ENCODE measurements at regions of chr17 and their contacts with region 1.

Region 1: GRCh38 chr17:5486204-5487124 is at the start of gene MIS12:
- DNase-seq: peak; percentile 95
- ATAC-seq: peak; percentile 94
- H3K4me3 ChIP-seq: peak within 1 kb of the TSS; percentile 100
- H3K27ac ChIP-seq: peak within 1 kb of the TSS; percentile 97
- H3K4me1 ChIP-seq: peaks cover 11% of the 10 kb centered on the region
- H3K27me3 ChIP-seq: no peaks in the 10 kb centered on the region
- CTCF ChIP-seq: no peak
- total RNA-seq, gene MIS12: 9.3 and 10.6 TPM in 2 replicates

Region 2: GRCh38 chr17:5468075-5468473 is 18.4 kb before region 1 on chr17:
- CTCF ChIA-PET with region 1: no interaction called
- POLR2A ChIA-PET with region 1: no interaction called
- intact Hi-C with region 1: loop called (anchors 1 kb)
- DNase-seq: no peak
- ATAC-seq: peak; percentile 14
- H3K4me3 ChIP-seq: peak overlapping the region; percentile 97
- H3K27ac ChIP-seq: peak overlapping the region; percentile 52
- H3K4me1 ChIP-seq: peaks cover 13% of the 10 kb centered on the region
- H3K27me3 ChIP-seq: no peaks in the 10 kb centered on the region
- CTCF ChIP-seq: no peak

Region 3: DNA sequence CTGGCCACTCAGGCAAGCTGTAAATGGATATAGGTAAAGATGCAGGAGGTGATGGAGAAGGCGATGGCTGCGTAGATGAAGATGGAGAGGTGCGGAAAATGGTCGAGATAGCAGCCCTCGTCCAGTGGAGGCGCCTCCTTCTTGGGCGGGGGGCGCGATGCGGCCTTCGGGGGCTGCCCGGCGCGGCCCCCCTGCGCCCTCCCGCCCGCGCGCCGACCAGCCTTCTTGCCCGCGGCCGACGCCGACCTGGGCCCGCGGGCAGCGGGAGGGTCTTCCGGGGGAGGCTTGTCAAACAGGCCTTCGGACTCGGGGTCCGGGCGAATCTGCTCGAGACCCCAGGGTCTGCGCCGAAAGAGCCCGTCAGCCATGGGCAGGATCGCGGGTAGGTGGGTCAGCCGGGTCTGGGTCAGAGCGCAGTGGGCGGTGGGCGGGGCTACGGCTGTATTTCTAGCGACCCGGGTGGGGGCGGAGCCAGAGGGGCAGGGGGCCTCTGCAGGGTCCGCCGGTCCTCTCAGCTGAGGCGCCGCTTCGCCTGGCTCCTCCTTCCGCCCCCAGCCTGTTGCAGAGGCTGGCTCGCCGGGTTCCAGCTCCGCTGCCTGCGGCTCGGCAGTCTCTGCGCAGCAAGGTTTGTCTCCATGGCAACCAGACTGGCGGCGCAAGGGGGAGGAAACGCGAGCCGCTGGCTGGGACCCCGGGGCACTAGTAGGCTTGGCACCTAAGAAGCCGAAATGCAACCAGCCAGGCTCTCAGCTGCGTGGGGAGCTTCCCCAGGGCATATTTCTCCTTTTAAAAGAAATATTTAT is 14.3 kb after region 1 on chr17:
- CTCF ChIA-PET with region 1: no interaction called
- POLR2A ChIA-PET with region 1: no interaction called
- intact Hi-C with region 1: loop called (anchors 1 kb)
- DNase-seq: peak; percentile 54
- ATAC-seq: peak; percentile 75
- H3K4me3 ChIP-seq: peak overlapping the region; percentile 66
- H3K27ac ChIP-seq: no peak overlapping the region
- H3K4me1 ChIP-seq: no peaks in the 10 kb centered on the region; the same call in 1 of the 2 replicates
- H3K27me3 ChIP-seq: peaks cover 7% of the 10 kb centered on the region
- CTCF ChIP-seq: no peak

Region 4: DNA sequence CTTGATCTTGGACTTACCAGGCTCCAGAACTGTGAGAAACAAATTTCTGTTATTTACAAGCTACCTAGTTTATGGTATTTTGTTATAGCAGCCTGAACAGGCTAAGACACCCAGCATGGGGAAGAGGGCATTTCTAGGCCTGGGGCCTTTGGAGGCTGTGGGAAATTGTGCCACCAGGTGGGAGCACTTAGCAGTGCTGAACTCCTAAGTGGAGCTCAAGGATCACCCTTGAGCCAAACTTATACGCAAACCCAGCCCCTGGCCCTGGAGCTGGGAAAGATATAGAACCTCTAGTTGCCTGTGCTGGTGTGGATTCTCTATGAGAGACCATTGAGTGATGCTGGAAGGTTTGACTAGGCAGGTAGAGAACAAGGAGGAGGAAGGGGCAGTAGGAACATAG is 36.0 kb after region 1 on chr17:
- CTCF ChIA-PET with region 1: no interaction called
- POLR2A ChIA-PET with region 1: no interaction called
- intact Hi-C with region 1: no loop called
- DNase-seq: no peak
- ATAC-seq: no peak
- H3K4me3 ChIP-seq: no peak overlapping the region
- H3K27ac ChIP-seq: no peak overlapping the region
- H3K4me1 ChIP-seq: peaks cover 12% of the 10 kb centered on the region
- H3K27me3 ChIP-seq: no peaks in the 10 kb centered on the region
- CTCF ChIP-seq: no peak